MCF 10A (cell line): ENCODE measurements at regions of chr12 and their contacts with region 1.

Region 1: DNA sequence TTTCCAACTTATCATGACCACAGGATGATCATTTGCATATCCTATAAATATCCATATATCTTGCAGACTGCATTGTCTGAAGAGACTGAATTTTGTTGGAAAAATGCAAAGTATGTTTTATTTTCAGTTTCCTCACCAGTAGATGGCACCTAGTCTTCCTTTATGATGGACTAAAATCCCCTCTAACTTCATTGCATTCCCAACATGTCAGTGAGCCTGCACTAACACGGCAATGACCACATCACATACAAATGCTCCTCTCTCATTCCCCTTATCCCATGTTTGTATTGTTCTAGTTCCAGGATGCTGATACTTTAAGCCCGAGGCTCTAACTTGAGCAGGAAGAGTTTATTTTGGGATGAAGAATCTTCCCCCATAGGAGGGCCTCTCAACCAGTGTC is 24.7 kb upstream of the MYBPC1 start:
- DNase-seq: peak; percentile 41
- H3K4me3 Mint-ChIP-seq: no peak overlapping the region
- H3K27ac Mint-ChIP-seq: no peak overlapping the region
- H3K4me1 Mint-ChIP-seq: peaks cover 12% of the 10 kb centered on the region
- H3K27me3 Mint-ChIP-seq: no peaks in the 10 kb centered on the region
- CTCF ChIP-seq: peak; percentile 36

Region 2: DNA sequence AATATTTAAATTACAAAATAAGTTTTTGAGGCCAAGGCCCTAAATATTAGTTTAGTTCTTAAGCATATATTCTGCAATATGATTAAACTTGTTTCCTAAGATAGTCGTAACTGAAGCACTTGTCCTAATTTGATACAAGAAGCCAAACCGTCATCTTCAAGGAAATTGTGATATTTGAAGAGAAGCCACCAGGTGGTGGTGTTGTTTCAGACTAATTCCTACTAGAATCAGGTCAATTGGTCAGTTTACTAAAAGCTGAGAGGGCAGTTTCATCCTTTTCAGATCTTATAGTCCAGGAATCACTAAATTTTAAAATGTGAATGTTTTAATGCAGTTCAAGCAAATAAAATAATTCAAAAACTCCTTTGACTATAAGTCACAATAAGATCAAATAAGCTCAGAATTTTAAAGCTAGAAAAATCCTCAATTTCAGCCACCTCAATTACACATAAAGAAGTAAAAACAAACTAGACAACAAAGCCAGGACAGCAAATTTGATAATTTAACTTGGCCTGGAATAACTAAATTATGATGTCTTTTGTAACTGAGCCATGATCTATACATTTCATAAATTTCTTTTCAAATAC is 155.4 kb before region 1 on chr12:
- CTCF ChIA-PET with region 1: interaction called, 3 read pairs
- POLR2A ChIA-PET with region 1: no interaction called
- intact Hi-C with region 1: loop called (anchors 10 kb)
- DNase-seq: peak; percentile 77
- H3K4me3 Mint-ChIP-seq: no peak overlapping the region
- H3K27ac Mint-ChIP-seq: no peak overlapping the region
- H3K4me1 Mint-ChIP-seq: no peaks in the 10 kb centered on the region
- H3K27me3 Mint-ChIP-seq: no peaks in the 10 kb centered on the region
- CTCF ChIP-seq: peak; percentile 46

Region 3: DNA sequence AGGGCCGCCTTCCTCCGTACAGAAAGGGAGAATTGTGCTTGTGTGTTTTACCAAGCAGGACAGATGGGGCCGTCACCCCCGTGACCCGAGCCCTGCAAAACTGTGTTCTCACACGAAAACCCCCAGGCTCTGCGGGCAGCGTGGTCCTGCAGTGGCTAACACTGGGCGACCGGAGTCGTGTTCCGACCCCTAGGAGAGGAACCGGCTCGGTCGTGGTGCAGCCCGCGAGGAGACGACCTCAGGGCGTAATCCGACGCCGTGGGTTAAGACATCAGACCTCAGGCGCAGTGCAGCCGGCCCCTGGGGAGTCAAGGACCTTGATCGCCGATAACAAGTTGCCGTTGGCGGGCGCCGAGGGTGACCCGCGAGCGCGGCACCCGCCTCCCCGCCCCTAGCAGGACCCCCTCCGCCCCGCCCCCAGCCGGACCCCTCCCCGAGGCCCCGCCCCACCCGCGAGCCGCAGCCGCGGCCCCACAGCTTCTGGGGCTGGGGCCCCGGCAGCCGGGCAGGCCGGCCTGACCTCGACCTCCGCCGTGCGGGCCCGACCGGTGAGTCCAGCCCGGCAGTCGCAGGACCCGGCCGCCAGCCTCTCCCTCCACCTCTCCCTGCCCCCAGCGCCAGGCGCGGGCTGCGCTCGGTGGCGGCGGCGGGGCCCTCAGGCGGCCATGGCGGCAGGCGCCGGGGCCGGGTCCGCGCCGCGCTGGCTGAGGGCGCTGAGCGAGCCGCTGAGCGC is 127.3 kb after region 1 on chr12 and contains the start of gene CHPT1:
- CTCF ChIA-PET with region 1: no interaction called
- POLR2A ChIA-PET with region 1: no interaction called
- intact Hi-C with region 1: loop called (anchors 1 kb)
- DNase-seq: peak; percentile 52
- H3K4me3 Mint-ChIP-seq: peak within 1 kb of the TSS; percentile 91
- H3K27ac Mint-ChIP-seq: peak within 1 kb of the TSS; percentile 78
- H3K4me1 Mint-ChIP-seq: peaks cover 38% of the 10 kb centered on the region
- H3K27me3 Mint-ChIP-seq: no peaks in the 10 kb centered on the region
- CTCF ChIP-seq: no peak
- total RNA-seq, gene CHPT1: 28.1 and 33.5 TPM in 2 replicates